OCI-LY7 (cell line): ENCODE measurements at regions of chr20 and their contacts with region 1.

Region 1: GRCh38 chr20:47540443-47541354 is 39.0 kb downstream of the NCOA3 start:
- DNase-seq: peak; percentile 29
- H3K4me3 ChIP-seq: no peak overlapping the region
- H3K27ac ChIP-seq: peak overlapping the region; percentile 23
- H3K4me1 ChIP-seq: peaks cover 82% of the 10 kb centered on the region
- CTCF ChIP-seq: no peak

Region 2: GRCh38 chr20:47272893-47273590 is 267.7 kb before region 1 on chr20:
- CTCF ChIA-PET with region 1: no interaction called
- POLR2A ChIA-PET with region 1: no interaction called
- intact Hi-C with region 1: no loop called
- DNase-seq: peak; percentile 75
- H3K4me3 ChIP-seq: no peak overlapping the region
- H3K27ac ChIP-seq: peak overlapping the region; percentile 3
- H3K4me1 ChIP-seq: peaks cover 39% of the 10 kb centered on the region
- CTCF ChIP-seq: peak; percentile 98

Region 3: DNA sequence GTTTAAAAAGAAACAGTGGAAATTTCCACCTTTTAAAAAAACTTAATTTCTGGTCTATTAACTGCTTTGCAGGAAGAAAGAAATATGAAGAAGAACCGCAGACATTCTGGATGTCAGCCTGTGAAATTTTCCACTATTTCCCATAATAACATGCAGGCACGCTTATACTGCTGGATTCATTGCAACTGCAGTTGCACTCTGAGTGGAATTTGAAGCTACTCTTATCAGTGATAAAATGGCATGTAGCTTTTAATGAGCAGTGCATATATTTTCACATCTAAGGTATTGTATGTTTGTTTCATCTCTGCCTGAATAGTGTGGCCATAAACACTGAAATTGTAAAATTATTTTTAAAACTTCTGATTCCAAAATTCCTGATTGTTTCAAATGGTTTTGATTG is 10.9 kb before region 1 on chr20:
- CTCF ChIA-PET with region 1: interaction called, 3 read pairs
- POLR2A ChIA-PET with region 1: interaction called, 12 read pairs
- intact Hi-C with region 1: no loop called
- DNase-seq: no peak
- H3K4me3 ChIP-seq: no peak overlapping the region
- H3K27ac ChIP-seq: no peak overlapping the region
- H3K4me1 ChIP-seq: peaks cover 42% of the 10 kb centered on the region
- CTCF ChIP-seq: no peak

Region 4: DNA sequence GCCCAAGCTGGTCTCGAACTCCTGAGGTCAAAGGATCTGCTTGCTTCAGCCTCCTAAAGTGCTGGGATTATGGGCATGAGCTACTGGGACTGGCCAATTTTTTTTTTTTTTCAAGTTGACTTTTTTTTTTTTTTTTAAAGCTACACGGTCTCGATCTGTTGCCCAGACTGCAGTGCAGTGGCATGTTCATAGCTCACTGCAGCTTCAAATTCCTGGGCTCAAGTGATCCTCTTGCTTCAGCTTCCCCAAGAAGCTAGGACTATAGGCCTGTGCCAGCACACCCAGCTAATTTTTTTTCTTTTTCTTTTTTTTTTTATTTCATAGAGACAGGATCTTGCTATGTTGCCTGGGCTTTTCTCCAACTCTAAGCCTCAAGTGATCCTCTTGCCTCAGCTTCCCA is 20.5 kb after region 1 on chr20:
- CTCF ChIA-PET with region 1: no interaction called
- POLR2A ChIA-PET with region 1: interaction called, 13 read pairs
- intact Hi-C with region 1: no loop called
- DNase-seq: no peak
- H3K4me3 ChIP-seq: peak overlapping the region; percentile 21
- H3K27ac ChIP-seq: peak overlapping the region; percentile 27
- H3K4me1 ChIP-seq: peaks cover 92% of the 10 kb centered on the region
- CTCF ChIP-seq: no peak

Region 5: GRCh38 chr20:47642118-47642517 is 101.4 kb after region 1 on chr20:
- CTCF ChIA-PET with region 1: no interaction called
- POLR2A ChIA-PET with region 1: no interaction called
- intact Hi-C with region 1: no loop called
- DNase-seq: no peak
- H3K4me3 ChIP-seq: no peak overlapping the region
- H3K27ac ChIP-seq: no peak overlapping the region
- H3K4me1 ChIP-seq: no peaks in the 10 kb centered on the region
- CTCF ChIP-seq: no peak